Spleen (tissue), 13 donors: ENCODE measurements at regions of chr1 and their contacts with region 1.

Region 1: GRCh38 chr1:2290595-2291510 is 62.7 kb downstream of the SKI start:
- DNase-seq: peak; percentile 92
- H3K4me3 ChIP-seq: peak overlapping the region; percentile 11 to 61 (median 24)
- H3K27ac ChIP-seq: peak overlapping the region; percentile 57 to 88 (median 84)
- H3K4me1 ChIP-seq: peaks cover 63 to 98% (median 87%) of the 10 kb centered on the region in 6 donors
- H3K27me3 ChIP-seq: peaks cover 0 to 6% (median 0%) of the 10 kb centered on the region in 7 donors
- CTCF ChIP-seq: no peak
- POLR2A ChIP-seq: no peak

Region 2: DNA sequence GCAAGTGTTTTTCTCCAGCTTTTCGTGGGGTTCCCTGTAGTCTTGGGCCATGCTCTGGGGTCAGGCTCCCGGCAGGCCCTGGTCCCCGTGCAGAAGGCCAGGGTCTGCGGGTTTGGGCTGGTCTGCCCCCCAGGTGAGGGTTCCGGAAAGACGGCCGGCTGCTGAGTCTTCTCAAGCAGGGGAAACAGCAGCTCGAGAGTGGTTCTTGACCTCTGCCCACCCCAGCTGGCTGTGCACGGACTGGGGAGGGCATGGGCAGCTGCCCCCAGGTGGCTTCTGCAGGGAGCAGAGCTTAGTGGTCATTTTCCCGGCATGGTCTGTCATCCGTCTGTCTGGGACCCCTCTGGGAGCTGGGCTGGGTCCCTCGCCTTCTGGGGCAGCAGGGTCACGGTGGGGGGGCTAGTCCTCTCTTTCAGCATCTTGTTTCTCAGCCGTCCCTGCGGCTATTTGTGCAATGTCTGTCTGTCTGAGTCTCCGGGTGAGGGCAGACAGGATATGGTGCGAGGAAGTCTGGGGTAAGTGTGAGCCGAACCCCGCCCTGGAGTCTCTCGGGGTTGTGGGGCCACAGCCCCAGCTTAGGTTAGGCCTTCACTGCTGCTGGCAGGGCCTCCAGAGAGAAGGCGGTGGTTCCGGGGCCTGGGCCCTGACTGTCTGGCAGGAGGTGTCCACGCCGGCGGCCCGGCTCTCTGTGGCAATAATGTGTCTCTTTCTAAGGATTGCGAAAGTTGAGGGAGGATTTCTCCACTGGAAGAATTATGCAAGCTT is 56.7 kb before region 1 on chr1:
- intact Hi-C with region 1: loop called (anchors 10 kb)
- DNase-seq: peak; percentile 97
- H3K4me3 ChIP-seq: peak overlapping the region in 7 of 8 donors; percentile 5 to 90 (median 26)
- H3K27ac ChIP-seq: peak overlapping the region; percentile 43 to 99 (median 86)
- H3K4me1 ChIP-seq: peaks cover 92 to 100% (median 100%) of the 10 kb centered on the region in 6 donors
- H3K27me3 ChIP-seq: no peaks in the 10 kb centered on the region
- CTCF ChIP-seq: peak in 1 of 11 experiments; percentile 16
- POLR2A ChIP-seq: no peak

Region 3: GRCh38 chr1:2345223-2346080 is 54.6 kb after region 1 on chr1:
- intact Hi-C with region 1: no loop called
- DNase-seq: peak; percentile 60
- H3K4me3 ChIP-seq: no peak overlapping the region
- H3K27ac ChIP-seq: no peak overlapping the region
- H3K4me1 ChIP-seq: no peaks in the 10 kb centered on the region
- H3K27me3 ChIP-seq: no peaks in the 10 kb centered on the region
- CTCF ChIP-seq: no peak
- POLR2A ChIP-seq: no peak

Region 4: DNA sequence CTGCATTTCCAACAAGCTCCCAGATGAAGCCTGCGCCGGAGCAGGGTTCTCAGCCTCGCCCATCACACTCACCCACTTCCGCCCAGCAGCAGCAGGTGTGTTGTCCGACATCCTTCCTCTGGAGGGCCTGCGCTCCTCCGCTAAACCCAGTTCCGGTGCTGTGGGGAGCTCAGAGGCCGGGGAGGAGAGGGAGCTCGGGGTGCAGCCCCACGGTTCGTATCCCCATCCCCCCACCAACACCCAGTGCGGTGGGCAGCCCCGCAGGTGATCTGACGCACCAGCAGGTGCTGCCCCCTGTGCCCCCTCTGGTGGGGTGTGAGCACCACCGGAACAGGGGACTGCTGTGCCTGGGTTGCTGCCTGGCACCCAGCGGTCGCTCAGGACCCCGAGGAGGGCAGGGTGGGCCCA is 125.0 kb after region 1 on chr1:
- intact Hi-C with region 1: no loop called
- DNase-seq: peak; percentile 89
- H3K4me3 ChIP-seq: peak overlapping the region; percentile 12 to 69 (median 38)
- H3K27ac ChIP-seq: peak overlapping the region in 7 of 8 donors; percentile 9 to 88 (median 59)
- H3K4me1 ChIP-seq: peaks cover 29 to 66% (median 52%) of the 10 kb centered on the region in 6 donors
- H3K27me3 ChIP-seq: peaks cover 0 to 58% (median 9%) of the 10 kb centered on the region in 7 donors
- CTCF ChIP-seq: peak in 1 of 11 experiments; percentile 15
- POLR2A ChIP-seq: no peak